ENCODE measurements at regions of chr2 and their contacts with region 1.

Region 1: DNA sequence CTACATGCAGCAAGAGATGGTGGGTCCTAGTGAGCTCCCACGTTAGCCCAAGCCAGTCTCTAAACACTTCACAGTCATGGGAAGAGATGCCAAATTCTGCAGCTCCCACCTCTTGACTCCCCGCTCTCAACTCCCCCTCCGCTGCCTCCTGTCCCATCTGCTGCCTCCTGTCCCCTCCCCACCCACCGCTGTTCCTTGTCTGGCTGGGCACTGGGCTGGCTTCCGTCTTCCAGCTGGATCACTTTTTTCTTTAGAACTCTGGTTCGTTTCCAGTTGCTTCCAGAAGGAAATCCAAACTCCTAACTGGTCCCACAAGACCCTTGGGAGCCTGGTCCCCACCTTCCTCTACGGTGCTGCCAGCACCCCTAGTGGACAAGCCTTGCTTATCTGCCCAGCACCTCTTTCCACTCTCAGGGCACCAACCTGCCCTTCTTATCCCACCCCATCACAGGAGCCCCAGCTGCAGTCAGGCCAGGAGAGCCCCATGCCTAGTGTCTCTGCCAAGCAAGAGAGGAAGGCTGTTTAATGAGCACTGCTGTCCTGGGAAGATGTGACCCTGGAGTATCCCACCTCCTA is 12.1 kb upstream of the TWIST2 start:
- DNase-seq: no peak
- ATAC-seq: peak; percentile 90
- H3K4me3 ChIP-seq: no peak overlapping the region
- H3K27ac ChIP-seq: no peak overlapping the region
- H3K4me1 ChIP-seq: no peaks in the 10 kb centered on the region
- H3K27me3 ChIP-seq: peaks cover 0 to 37% of the 10 kb centered on the region in 2 experiments; a peak in 3 of 5 replicates
- CTCF ChIP-seq: peak; percentile 29; the same call in 1 of the 2 replicates
- EP300 ChIP-seq: no peak
- POLR2A ChIP-seq: no peak
- RAD21 ChIP-seq: no peak

Region 2: DNA sequence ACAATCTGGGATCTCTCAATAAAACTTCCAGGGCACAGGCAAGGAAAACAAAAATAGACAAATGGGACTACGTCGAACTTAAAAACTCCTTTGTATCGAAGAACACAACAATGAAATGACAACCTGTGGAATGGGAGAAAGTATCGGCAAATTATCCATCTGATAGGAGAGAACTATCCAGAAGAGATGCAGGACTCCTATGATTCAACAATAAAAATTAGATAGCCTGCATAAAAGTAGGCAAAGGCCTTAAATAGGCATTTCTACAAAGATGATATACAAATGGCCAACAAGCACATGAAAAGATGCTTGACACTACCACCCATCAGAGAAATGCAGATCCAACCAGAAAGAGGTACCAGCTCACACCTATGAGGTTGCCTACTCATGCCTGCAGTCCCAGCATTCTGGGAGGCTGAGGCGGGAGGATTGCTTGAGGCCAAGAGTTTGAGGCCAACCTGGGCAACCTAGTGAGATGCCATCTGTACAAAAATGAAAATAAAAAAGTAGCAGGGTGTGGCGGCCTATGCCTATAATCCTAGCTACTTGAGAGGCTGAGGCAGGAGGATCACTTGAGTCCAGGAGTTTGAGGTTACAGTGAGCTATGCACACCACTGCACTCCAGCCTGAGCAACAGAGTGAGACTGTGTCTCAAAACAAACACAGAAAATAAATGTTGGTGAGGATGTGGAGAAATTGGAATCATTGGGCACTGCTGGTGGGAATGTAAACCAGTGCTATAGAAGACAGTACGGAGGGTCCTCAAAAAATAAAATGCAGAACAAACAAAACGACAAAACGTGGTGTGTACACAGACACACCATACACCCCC is 33.7 kb after region 1 on chr2:
- CTCF ChIA-PET with region 1: no interaction called
- POLR2A ChIA-PET with region 1: no interaction called
- in situ Hi-C with region 1: loop called (anchors 5 kb)
- intact Hi-C with region 1: no loop called
- DNase-seq: peak; percentile 39
- ATAC-seq: peak; percentile 15
- H3K4me3 ChIP-seq: no peak overlapping the region
- H3K27ac ChIP-seq: no peak overlapping the region
- H3K4me1 ChIP-seq: peaks cover 47% of the 10 kb centered on the region
- H3K27me3 ChIP-seq: peaks cover 0 to 16% of the 10 kb centered on the region in 2 experiments; a peak in 3 of 5 replicates
- CTCF ChIP-seq: no peak
- EP300 ChIP-seq: no peak
- POLR2A ChIP-seq: no peak
- RAD21 ChIP-seq: no peak

Measured in HepG2 (cell line).